Activated CD4-positive, alpha-beta T cell treated with anti-CD3 and anti-CD28 coated beads for 36 hours (primary cell): ENCODE measurements at regions of chr2 and their contacts with region 1.

Region 1: DNA sequence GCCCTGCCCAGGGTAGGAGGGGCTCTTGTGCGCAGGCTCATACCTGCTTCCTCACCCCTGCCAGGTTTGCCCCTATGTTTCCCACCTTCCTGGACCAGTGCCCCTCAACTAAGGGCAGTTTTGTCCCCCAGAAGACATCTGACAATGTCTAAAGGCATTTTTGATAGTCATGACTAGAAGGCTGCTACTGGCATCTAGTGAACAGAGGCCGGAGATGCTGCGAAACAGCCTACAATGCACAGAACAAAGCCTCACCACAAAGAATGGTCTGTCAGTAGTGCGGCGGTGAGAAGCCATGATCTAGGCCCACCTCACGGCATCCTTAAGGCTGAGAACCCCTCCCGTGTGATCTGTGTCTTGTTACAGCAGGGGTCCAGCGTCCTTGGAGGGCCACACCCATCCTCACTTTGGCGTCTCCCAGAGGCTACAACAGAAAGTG is 96.0 kb downstream of the TMEM17 start:
- DNase-seq: no peak
- ATAC-seq: no peak
- H3K4me3 Mint-ChIP-seq: no peak overlapping the region
- H3K27ac Mint-ChIP-seq: no peak overlapping the region
- H3K4me1 Mint-ChIP-seq: peaks cover 4% of the 10 kb centered on the region
- H3K27me3 Mint-ChIP-seq: no peaks in the 10 kb centered on the region

Region 2: DNA sequence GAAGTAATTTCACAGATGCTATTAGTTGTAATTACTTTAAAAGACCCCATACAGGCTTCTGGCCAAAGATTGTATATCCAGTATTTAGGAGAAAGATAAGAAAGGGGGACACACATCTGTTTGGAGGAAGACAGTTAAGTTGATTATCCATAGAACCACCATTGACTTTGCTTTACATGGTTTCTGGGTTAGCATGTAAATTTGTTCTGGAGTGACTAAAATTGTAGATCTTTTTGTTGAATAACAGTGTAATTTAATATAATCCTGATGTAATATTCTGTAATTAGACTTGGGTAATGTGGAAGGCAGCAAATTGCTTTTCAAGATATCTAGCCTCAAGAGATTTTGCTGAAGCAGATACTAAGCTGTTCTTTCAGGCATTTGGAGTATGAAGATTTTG is 487.3 kb before region 1 on chr2:
- CTCF ChIA-PET with region 1: interaction called, 4 read pairs
- POLR2A ChIA-PET with region 1: no interaction called
- intact Hi-C with region 1: loop called (anchors 1 kb)
- DNase-seq: no peak
- ATAC-seq: no peak
- H3K4me3 Mint-ChIP-seq: no peak overlapping the region
- H3K27ac Mint-ChIP-seq: no peak overlapping the region
- H3K4me1 Mint-ChIP-seq: no peaks in the 10 kb centered on the region
- H3K27me3 Mint-ChIP-seq: no peaks in the 10 kb centered on the region

Region 3: GRCh38 chr2:61993444-61994024 is 416.5 kb before region 1 on chr2:
- CTCF ChIA-PET with region 1: interaction called, 6 read pairs
- POLR2A ChIA-PET with region 1: no interaction called
- intact Hi-C with region 1: loop called (anchors 1 kb)
- DNase-seq: peak; percentile 40
- ATAC-seq: no peak
- H3K4me3 Mint-ChIP-seq: no peak overlapping the region
- H3K27ac Mint-ChIP-seq: no peak overlapping the region
- H3K4me1 Mint-ChIP-seq: peaks cover 8% of the 10 kb centered on the region
- H3K27me3 Mint-ChIP-seq: no peaks in the 10 kb centered on the region

Region 4: GRCh38 chr2:62306751-62307468 is 103.1 kb before region 1 on chr2:
- CTCF ChIA-PET with region 1: interaction called, 4 read pairs
- POLR2A ChIA-PET with region 1: no interaction called
- intact Hi-C with region 1: loop called in 1 of 2 experiments (anchors 5 kb)
- DNase-seq: peak; percentile 69
- ATAC-seq: peak; percentile 20
- H3K4me3 Mint-ChIP-seq: no peak overlapping the region
- H3K27ac Mint-ChIP-seq: peak overlapping the region; percentile 79
- H3K4me1 Mint-ChIP-seq: peaks cover 72% of the 10 kb centered on the region
- H3K27me3 Mint-ChIP-seq: no peaks in the 10 kb centered on the region